ENCODE measurements at regions of chr17 and their contacts with region 1.

Region 1: DNA sequence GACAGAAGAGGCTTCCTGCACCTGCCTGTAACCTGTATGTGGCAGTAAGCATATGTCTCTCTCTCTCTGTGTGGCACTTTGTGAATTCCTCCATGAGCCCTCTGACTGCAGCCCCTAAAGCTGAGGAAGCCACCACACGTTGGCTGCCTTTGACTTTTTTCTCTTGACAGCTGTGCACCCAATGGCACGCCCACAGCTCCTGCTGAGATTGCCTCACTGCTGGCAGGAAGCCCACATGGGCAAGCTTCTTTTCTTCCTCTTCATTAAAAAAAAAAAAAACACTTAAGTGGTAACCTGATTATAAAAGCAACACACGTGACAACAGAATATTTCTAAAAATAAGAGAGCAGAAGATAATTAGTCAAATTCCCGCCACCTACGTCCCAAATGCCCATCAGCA is 34.0 kb upstream of the PIRT start:
- DNase-seq: no peak
- H3K4me3 ChIP-seq: no peak overlapping the region
- H3K27ac ChIP-seq: no peak overlapping the region
- H3K4me1 ChIP-seq: no peaks in the 10 kb centered on the region
- H3K27me3 ChIP-seq: peaks cover 4% of the 10 kb centered on the region
- CTCF ChIP-seq: no peak

Region 2: DNA sequence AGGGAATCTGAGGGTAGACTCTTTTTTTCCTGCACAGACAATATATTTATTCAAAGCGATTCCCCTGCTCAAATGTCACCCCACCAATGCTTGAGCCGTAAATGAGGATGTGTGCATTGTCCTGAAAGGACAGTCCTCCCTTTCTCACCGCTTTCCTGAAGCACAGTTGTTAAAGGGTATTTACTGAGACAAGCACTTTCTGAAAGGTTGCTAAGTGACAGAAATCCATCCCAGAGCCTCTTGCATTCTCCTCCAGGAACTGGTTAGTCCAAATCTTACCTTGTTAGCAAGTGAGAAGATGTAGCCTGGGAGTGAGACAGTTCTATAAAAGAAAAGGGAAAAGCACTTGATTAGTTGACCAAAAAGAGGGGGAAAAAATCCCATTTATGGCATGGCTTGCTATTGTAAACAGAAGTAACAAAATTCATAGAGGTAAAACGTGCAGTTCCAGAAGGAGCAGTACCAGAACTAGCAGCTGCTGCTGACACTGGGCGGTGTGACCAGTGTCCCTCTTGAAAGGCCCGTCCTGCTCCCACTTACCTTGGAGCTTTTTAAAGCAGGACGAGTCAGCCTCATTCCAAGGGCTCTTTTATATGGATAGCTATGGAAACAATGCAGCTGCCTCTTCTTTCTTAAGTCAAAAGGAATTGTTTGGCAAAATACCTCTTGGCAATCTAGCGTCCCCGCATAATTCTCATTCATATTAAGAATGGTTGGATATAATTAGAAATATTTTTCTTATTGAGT is 322.6 kb before region 1 on chr17 and contains the start of gene MYH2:
- dilution Hi-C with region 1: no loop called
- DNase-seq: no peak
- H3K4me3 ChIP-seq: no peak within 1 kb of the TSS
- H3K27ac ChIP-seq: no peak within 1 kb of the TSS
- H3K4me1 ChIP-seq: no peaks in the 10 kb centered on the region
- H3K27me3 ChIP-seq: no peaks in the 10 kb centered on the region
- CTCF ChIP-seq: no peak
- polyA plus RNA-seq, gene MYH2: not detected in 3 replicates

Region 3: GRCh38 chr17:10681866-10682446 is 190.0 kb before region 1 on chr17:
- dilution Hi-C with region 1: no loop called
- DNase-seq: no peak
- H3K4me3 ChIP-seq: no peak overlapping the region
- H3K27ac ChIP-seq: no peak overlapping the region
- H3K4me1 ChIP-seq: no peaks in the 10 kb centered on the region
- H3K27me3 ChIP-seq: no peaks in the 10 kb centered on the region
- CTCF ChIP-seq: no peak

Region 4: DNA sequence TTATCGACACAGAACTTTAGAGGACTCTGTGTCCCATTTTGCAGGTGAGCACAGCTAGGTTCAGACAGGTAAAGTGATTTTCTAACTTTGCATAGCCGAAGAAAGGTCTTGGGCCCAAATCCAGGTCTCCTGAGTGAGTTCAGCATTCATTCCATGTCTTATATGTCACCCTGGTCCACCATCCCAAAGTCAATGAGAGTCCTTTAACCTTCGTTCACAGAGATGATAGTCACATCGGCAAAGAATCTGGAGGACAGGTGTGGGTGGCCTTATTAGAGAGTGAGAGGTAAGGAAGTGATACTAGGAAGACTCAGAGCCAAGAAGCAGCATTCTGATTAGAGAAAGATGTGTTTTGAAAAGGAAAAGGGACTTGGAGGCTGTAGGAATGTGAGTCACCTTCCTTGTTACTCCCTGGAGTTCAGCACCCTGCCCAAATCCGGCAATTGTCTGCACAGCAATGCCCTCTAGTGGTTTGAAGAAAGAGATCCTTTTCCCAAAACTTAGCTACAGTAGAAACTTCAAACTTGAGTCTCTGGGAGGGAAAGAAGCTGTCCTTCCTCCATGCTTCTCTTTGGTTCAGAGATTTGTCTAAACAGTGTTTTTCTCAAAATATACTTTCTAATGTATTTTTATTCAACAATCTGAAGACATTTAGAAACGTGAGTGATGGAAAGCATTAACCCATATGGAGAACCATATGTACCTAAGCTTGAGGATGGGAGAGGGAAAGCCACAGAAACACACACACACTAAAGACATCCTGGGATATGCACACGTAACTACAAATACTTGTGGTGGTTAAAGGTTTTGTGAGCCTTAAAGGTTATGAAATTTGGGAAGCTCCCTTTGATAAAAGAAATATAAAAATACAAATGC is 272.7 kb after region 1 on chr17:
- dilution Hi-C with region 1: loop called (anchors 25 kb)
- DNase-seq: peak; percentile 11
- H3K4me3 ChIP-seq: no peak overlapping the region
- H3K27ac ChIP-seq: no peak overlapping the region
- H3K4me1 ChIP-seq: no peaks in the 10 kb centered on the region
- H3K27me3 ChIP-seq: no peaks in the 10 kb centered on the region
- CTCF ChIP-seq: peak; percentile 75 to 79 (median 78)